Spleen (tissue), 13 donors: ENCODE measurements at regions of chr1 and their contacts with region 1.

Region 1: GRCh38 chr1:228515200-228515834 is 28.1 kb downstream of the RNF187 start:
- DNase-seq: no peak
- H3K4me3 ChIP-seq: no peak overlapping the region
- H3K27ac ChIP-seq: no peak overlapping the region
- H3K4me1 ChIP-seq: no peaks in the 10 kb centered on the region
- H3K27me3 ChIP-seq: peaks cover 0 to 26% (median 0%) of the 10 kb centered on the region in 7 donors
- CTCF ChIP-seq: peak; percentile 40 to 86 (median 72)
- POLR2A ChIP-seq: no peak

Region 2: GRCh38 chr1:228131766-228132165 is 383.6 kb before region 1 on chr1:
- intact Hi-C with region 1: loop called (anchors 2 kb)
- DNase-seq: no peak
- H3K4me3 ChIP-seq: no peak overlapping the region
- H3K27ac ChIP-seq: no peak overlapping the region
- H3K4me1 ChIP-seq: peaks cover 0 to 21% (median 9%) of the 10 kb centered on the region in 6 donors
- H3K27me3 ChIP-seq: peaks cover 0 to 7% (median 0%) of the 10 kb centered on the region in 7 donors
- CTCF ChIP-seq: no peak
- POLR2A ChIP-seq: no peak

Region 3: DNA sequence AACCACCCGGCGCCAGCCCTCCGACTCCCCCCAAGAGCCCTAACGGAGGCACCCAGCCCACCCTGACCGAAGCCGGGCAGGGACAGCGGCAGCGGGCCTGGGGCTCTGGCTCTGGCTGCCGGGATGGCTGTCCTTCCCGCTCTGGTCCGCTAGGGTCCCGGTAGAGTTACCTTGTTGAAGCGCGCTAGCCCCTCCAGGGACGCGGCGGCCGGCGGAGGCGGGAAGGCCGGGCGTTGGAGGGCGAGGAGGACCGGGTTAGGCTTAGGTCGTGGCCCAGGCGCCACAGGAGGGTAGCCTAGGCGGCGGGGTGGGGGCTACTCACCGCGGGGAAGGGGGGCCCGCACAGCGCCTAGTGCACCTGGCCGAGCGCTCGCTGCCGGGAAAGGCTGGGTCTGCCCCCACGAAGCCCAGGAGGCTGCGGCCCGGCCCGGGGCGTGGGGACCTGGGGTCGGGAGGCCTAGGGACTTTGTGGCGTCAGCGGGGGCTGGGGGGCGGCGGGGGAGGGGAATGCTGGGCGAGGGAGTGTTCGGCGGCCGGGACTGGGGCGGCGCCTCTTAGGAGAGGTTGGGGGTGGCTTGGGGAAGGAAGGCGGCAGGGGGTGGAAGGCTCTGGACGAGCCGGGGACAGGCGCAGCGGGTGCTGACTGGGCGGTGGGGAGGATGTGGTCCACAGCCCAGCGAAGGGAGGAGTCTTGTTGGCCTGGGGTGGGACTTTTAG is 98.9 kb before region 1 on chr1 and contains the start of gene TRIM17:
- intact Hi-C with region 1: no loop called
- DNase-seq: peak; percentile 82
- H3K4me3 ChIP-seq: peak within 1 kb of the TSS; percentile 0 to 70 (median 38)
- H3K27ac ChIP-seq: peak within 1 kb of the TSS in 5 of 8 donors; percentile 31 to 64 (median 54)
- H3K4me1 ChIP-seq: peaks cover 0 to 32% (median 18%) of the 10 kb centered on the region in 6 donors
- H3K27me3 ChIP-seq: peaks cover 0 to 46% (median 17%) of the 10 kb centered on the region in 7 donors
- CTCF ChIP-seq: peak in 8 of 11 experiments; percentile 17 to 60 (median 42)
- POLR2A ChIP-seq: no peak
- total RNA-seq, gene TRIM17: 3.5 to 7.1 (median 5.4) TPM